Caco-2 (cell line): ENCODE measurements at regions of chr5 and their contacts with region 1.

Region 1: GRCh38 chr5:12109084-12109708 is 204.9 kb upstream of the CTNND2 start:
- DNase-seq: peak; percentile 51 to 63
- H3K4me3 ChIP-seq: no peak overlapping the region
- H3K4me3 Mint-ChIP-seq: peak overlapping the region; percentile 21
- H3K27ac Mint-ChIP-seq: peak overlapping the region; percentile 15
- H3K4me1 ChIP-seq: peaks cover 33% of the 10 kb centered on the region
- H3K4me1 Mint-ChIP-seq: peaks cover 32% of the 10 kb centered on the region
- H3K27me3 ChIP-seq: no peaks in the 10 kb centered on the region
- H3K27me3 Mint-ChIP-seq: no peaks in the 10 kb centered on the region
- CTCF ChIP-seq: no peak

Region 2: GRCh38 chr5:12095808-12096281 is 13.4 kb before region 1 on chr5:
- CTCF ChIA-PET with region 1: no interaction called
- POLR2A ChIA-PET with region 1: no interaction called
- intact Hi-C with region 1: no loop called
- DNase-seq: no peak
- H3K4me3 ChIP-seq: no peak overlapping the region
- H3K4me3 Mint-ChIP-seq: no peak overlapping the region
- H3K27ac Mint-ChIP-seq: no peak overlapping the region
- H3K4me1 ChIP-seq: no peaks in the 10 kb centered on the region
- H3K4me1 Mint-ChIP-seq: no peaks in the 10 kb centered on the region
- H3K27me3 ChIP-seq: no peaks in the 10 kb centered on the region
- H3K27me3 Mint-ChIP-seq: no peaks in the 10 kb centered on the region
- CTCF ChIP-seq: no peak

Region 3: DNA sequence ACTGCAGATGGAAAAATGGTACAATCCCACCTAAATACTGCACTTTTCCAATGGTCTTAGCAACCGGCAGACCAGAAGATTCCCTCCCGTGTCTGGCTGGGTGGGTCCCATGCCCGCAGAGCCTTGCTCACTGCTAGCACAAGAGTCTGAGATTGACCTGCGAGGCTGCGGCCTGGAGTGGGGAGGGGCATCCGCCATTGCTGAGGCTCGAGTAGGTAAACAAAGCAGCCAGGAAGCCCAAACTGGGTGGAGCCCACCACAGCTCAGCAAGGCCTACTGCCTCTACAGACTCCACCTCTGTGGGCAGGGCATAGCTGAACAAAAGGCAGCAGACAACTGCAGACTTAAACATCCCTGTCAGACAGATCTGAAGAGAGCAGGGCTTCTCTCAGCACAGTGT is 16.7 kb after region 1 on chr5:
- CTCF ChIA-PET with region 1: no interaction called
- POLR2A ChIA-PET with region 1: no interaction called
- intact Hi-C with region 1: loop called (anchors 1 kb)
- DNase-seq: no peak
- H3K4me3 ChIP-seq: no peak overlapping the region
- H3K4me3 Mint-ChIP-seq: no peak overlapping the region
- H3K27ac Mint-ChIP-seq: no peak overlapping the region
- H3K4me1 ChIP-seq: peaks cover 14% of the 10 kb centered on the region
- H3K4me1 Mint-ChIP-seq: peaks cover 10% of the 10 kb centered on the region
- H3K27me3 ChIP-seq: no peaks in the 10 kb centered on the region
- H3K27me3 Mint-ChIP-seq: no peaks in the 10 kb centered on the region
- CTCF ChIP-seq: no peak

Region 4: GRCh38 chr5:12332480-12333175 is 223.4 kb after region 1 on chr5:
- CTCF ChIA-PET with region 1: no interaction called
- POLR2A ChIA-PET with region 1: no interaction called
- intact Hi-C with region 1: loop called (anchors 2 kb)
- DNase-seq: no peak
- H3K4me3 ChIP-seq: no peak overlapping the region
- H3K4me3 Mint-ChIP-seq: no peak overlapping the region
- H3K27ac Mint-ChIP-seq: no peak overlapping the region
- H3K4me1 ChIP-seq: peaks cover 8% of the 10 kb centered on the region
- H3K4me1 Mint-ChIP-seq: peaks cover 22% of the 10 kb centered on the region
- H3K27me3 ChIP-seq: no peaks in the 10 kb centered on the region
- H3K27me3 Mint-ChIP-seq: no peaks in the 10 kb centered on the region
- CTCF ChIP-seq: no peak